Heart left ventricle (tissue), 16 donors: ENCODE measurements at regions of chr3 and their contacts with region 1.

Region 1: DNA sequence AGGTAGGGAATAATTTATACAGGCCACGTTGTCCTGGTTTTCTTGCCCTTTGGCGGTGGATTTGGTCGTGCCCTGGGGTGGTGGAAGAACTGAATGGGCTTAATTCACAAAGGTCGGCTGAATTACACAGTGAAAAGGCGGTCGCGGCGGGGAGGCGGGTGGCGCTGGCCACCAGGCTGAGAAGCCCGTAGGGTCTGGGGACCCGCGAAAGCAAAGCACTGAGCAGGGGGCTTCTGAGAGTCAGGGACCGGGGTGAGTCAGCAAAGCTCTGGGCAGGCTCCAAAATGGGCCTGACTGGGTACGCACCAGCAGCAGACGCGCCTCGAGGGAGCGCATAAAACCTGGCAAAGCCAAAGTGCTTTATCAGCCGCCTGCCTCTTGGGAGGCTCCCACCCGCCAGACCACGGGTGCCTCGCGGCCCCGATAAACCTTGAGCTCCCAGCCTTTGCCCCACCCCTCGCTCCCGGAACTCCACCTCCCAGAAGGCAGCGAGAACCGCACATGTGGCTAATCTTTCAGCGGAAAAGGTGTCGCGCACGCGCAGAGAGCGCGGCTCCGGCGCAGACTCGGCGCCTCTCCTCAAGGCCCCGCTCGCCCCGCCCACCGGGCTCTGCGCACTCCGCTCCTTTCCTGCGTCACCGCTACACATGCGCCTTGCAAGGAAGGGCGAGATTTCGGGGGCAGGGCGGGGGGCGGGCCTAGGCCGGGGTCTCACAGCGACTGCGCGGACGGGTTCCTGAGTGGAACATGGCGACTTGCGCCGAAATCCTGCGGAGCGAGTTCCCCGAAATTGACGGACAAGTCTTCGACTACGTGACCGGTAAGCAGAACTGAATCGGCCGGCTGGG is at the start of gene ABCF3:
- DNase-seq: peak; percentile 99 to 100 (median 100)
- ATAC-seq: peak; percentile 98
- H3K4me3 ChIP-seq: peak within 1 kb of the TSS; percentile 55 to 99 (median 92)
- H3K27ac ChIP-seq: peak within 1 kb of the TSS; percentile 54 to 96 (median 92)
- H3K4me1 ChIP-seq: peaks cover 0 to 33% (median 24%) of the 10 kb centered on the region in 12 donors
- H3K27me3 ChIP-seq: no peaks in the 10 kb centered on the region
- CTCF ChIP-seq: no peak
- POLR2A ChIP-seq: peak in 1 of 2 donors; percentile 73
- total RNA-seq, gene ABCF3: 58.2 to 81.9 (median 69.2) TPM

Region 2: GRCh38 chr3:184154885-184155643 is 30.6 kb before region 1 on chr3 and contains the start of gene DVL3:
- intact Hi-C with region 1: loop called in 1 of 10 experiments (anchors 5 kb)
- DNase-seq: peak; percentile 73 to 87 (median 82)
- ATAC-seq: peak; percentile 53 to 92 (median 82)
- H3K4me3 ChIP-seq: peak within 1 kb of the TSS; percentile 63 to 99 (median 90)
- H3K27ac ChIP-seq: peak within 1 kb of the TSS; percentile 73 to 98 (median 94)
- H3K4me1 ChIP-seq: peaks cover 2 to 55% (median 37%) of the 10 kb centered on the region in 12 donors
- H3K27me3 ChIP-seq: no peaks in the 10 kb centered on the region
- CTCF ChIP-seq: no peak
- POLR2A ChIP-seq: peak in 1 of 2 donors; percentile 49
- total RNA-seq, gene DVL3: 53.4 to 94.2 (median 70.9) TPM

Region 3: DNA sequence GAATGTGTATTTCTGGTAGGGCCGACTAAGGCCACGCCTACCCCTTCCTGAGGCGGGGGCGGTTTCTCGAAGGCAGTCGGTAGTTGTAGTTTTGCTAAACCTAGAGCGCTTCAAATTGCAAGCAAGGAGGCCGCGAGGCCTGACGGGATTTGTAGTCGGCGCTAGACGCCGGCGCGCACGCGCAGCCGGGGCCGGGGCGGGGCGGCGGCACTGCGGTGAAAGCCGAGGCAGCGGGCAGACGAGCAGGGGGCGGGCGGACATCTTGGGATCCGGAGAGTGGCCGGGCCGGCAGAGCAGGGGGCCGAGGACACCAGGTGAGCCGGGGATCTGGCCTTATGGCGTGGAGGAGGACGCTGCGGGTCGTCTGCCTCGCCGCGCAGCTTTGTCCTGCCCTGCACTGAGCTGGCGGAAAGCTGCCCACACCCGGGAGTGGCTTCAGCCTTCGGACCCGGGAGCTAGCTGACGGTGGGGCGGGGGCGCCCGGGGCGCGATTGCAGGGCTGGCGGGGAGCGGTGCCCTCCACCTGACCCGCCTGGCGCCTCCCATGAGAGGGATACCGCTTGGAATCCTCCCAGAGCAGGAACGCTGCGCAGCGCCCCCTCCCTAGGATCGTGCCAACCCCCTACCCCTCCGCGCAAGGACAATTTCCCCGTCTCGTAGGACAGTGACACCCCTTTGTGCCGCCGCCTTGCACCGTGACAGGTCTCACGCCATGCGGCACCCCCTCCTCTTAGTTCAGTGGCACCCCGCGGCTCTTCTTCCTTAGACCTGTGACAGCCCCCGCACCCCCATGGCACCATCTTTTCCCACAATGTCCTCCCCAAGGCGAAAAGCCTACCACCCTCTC is 10.8 kb before region 1 on chr3 and contains the start of gene AP2M1:
- intact Hi-C with region 1: loop called in 2 of 10 experiments (anchors 1 kb)
- DNase-seq: peak; percentile 98 to 99 (median 98)
- ATAC-seq: peak; percentile 91 to 97 (median 95)
- H3K4me3 ChIP-seq: peak within 1 kb of the TSS; percentile 64 to 100 (median 97)
- H3K27ac ChIP-seq: peak within 1 kb of the TSS; percentile 90 to 99 (median 96)
- H3K4me1 ChIP-seq: peaks cover 0 to 54% (median 33%) of the 10 kb centered on the region in 12 donors
- H3K27me3 ChIP-seq: no peaks in the 10 kb centered on the region
- CTCF ChIP-seq: peak in 1 of 12 donors; percentile 5
- POLR2A ChIP-seq: peak; percentile 40 to 93
- total RNA-seq, gene AP2M1: 225 to 400 (median 337) TPM

Region 4: GRCh38 chr3:184241447-184242296 is 56.0 kb after region 1 on chr3:
- intact Hi-C with region 1: loop called in 5 of 10 experiments (anchors 5 to 10 kb)
- DNase-seq: peak in 2 of 5 donors; percentile 51 to 65
- ATAC-seq: peak; percentile 61 to 77 (median 70)
- H3K4me3 ChIP-seq: no peak overlapping the region
- H3K27ac ChIP-seq: no peak overlapping the region
- H3K4me1 ChIP-seq: peaks cover 0 to 8% (median 5%) of the 10 kb centered on the region in 12 donors
- H3K27me3 ChIP-seq: peaks cover 0 to 3% (median 0%) of the 10 kb centered on the region in 9 donors
- CTCF ChIP-seq: peak in 11 of 12 donors; percentile 29 to 61 (median 46)
- POLR2A ChIP-seq: no peak